Natural killer cell (primary cell): ENCODE measurements at regions of chr12 and their contacts with region 1.

Region 1: DNA sequence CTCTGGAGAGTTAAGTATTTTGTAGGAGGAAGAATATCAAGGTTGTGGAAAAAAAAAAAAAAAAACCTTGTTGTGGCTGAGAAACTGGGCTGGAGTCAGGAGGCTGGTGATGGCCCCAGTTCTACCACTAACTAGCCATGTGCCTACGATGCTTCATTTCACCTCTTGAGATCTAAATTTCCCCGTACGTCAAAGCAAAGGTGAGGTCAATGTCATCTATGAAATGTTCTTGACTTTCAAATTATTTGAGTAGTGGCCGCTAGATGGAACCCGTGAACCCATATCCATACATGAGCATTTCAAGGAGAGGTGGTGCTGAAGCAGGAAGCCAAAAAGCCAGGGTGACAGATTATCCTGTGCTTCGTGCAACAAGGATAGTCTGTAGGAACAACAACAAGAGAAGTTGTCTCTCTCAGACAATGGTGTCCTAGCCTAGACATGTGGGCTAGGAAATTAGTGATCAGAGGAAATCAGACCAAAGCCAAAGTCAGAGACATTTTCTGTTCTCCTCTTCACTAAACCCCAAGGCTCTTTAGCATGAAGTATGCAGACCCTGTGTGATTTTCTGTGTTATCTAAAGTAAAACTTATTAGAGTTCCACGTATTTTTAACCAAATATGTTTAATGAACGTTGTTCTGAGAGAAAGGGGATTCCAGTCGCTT is 95.5 kb upstream of the ETV6 start:
- DNase-seq: peak in 1 of 2 donors; percentile 81
- ATAC-seq: peak; percentile 69 to 89 (median 78)
- H3K4me3 ChIP-seq: no peak overlapping the region
- H3K4me3 Mint-ChIP-seq: no peak overlapping the region
- H3K27ac ChIP-seq: no peak overlapping the region
- H3K27ac Mint-ChIP-seq: no peak overlapping the region
- H3K4me1 ChIP-seq: peaks cover 2% of the 10 kb centered on the region
- H3K4me1 Mint-ChIP-seq: peaks cover 7% of the 10 kb centered on the region in 2 donors
- H3K27me3 ChIP-seq: no peaks in the 10 kb centered on the region
- H3K27me3 Mint-ChIP-seq: peaks cover 23 to 36% of the 10 kb centered on the region in 2 donors
- CTCF ChIP-seq: peak; percentile 61

Region 2: DNA sequence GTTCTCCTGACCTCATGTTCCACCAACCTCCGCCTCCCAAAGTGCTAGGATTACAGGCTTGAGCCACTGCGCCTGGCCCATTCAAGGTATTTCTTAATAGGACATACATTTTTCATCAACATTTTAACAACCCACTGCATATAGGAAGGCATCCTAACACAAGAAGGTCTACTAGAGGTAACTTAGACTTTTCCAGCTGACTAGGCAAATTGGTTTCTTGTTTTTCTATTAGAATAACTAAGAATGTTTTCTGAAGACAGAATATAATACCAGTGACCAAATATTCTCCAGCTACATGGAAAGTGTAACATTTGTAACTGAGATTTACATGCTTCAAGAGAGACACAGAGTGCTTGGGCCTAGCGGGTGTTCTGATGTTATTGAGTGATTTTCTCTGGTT is 229.6 kb before region 1 on chr12:
- intact Hi-C with region 1: no loop called
- DNase-seq: no peak
- ATAC-seq: no peak
- H3K4me3 ChIP-seq: no peak overlapping the region
- H3K4me3 Mint-ChIP-seq: no peak overlapping the region
- H3K27ac ChIP-seq: no peak overlapping the region
- H3K27ac Mint-ChIP-seq: no peak overlapping the region
- H3K4me1 ChIP-seq: no peaks in the 10 kb centered on the region
- H3K4me1 Mint-ChIP-seq: no peaks in the 10 kb centered on the region
- H3K27me3 ChIP-seq: no peaks in the 10 kb centered on the region
- H3K27me3 Mint-ChIP-seq: peaks cover 0 to 2% of the 10 kb centered on the region in 2 donors
- CTCF ChIP-seq: no peak

Region 3: GRCh38 chr12:11540615-11541310 is 13.2 kb before region 1 on chr12:
- intact Hi-C with region 1: no loop called
- DNase-seq: peak in 1 of 2 donors; percentile 21
- ATAC-seq: no peak
- H3K4me3 ChIP-seq: no peak overlapping the region
- H3K4me3 Mint-ChIP-seq: no peak overlapping the region
- H3K27ac ChIP-seq: no peak overlapping the region
- H3K27ac Mint-ChIP-seq: no peak overlapping the region
- H3K4me1 ChIP-seq: peaks cover 15% of the 10 kb centered on the region
- H3K4me1 Mint-ChIP-seq: peaks cover 10 to 17% of the 10 kb centered on the region in 2 donors
- H3K27me3 ChIP-seq: no peaks in the 10 kb centered on the region
- H3K27me3 Mint-ChIP-seq: peaks cover 0 to 6% of the 10 kb centered on the region in 2 donors
- CTCF ChIP-seq: no peak

Region 4: DNA sequence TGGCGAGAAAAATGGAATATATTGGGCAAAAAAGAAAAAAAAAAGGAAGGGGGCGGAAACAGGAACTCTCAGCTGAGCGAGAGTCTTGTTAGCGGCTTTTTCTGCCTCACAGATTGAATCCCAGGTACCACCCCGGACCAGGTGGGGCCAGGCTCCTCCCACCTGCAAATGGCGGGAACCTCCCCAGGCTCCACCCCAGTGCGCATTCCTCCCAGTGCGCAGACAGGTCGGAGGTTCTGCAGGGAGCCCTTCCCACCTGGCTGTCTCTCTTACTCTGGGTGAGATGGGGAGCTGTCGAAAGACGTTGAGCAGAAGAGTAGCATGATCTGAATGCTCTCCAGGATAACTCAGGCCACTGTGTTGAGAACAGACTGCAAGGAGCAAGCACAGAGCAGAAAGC is 38.5 kb after region 1 on chr12:
- intact Hi-C with region 1: no loop called
- DNase-seq: no peak
- ATAC-seq: no peak
- H3K4me3 ChIP-seq: no peak overlapping the region
- H3K4me3 Mint-ChIP-seq: no peak overlapping the region
- H3K27ac ChIP-seq: no peak overlapping the region
- H3K27ac Mint-ChIP-seq: no peak overlapping the region
- H3K4me1 ChIP-seq: no peaks in the 10 kb centered on the region
- H3K4me1 Mint-ChIP-seq: no peaks in the 10 kb centered on the region
- H3K27me3 ChIP-seq: no peaks in the 10 kb centered on the region
- H3K27me3 Mint-ChIP-seq: peaks cover 4 to 14% of the 10 kb centered on the region in 2 donors
- CTCF ChIP-seq: no peak

Region 5: DNA sequence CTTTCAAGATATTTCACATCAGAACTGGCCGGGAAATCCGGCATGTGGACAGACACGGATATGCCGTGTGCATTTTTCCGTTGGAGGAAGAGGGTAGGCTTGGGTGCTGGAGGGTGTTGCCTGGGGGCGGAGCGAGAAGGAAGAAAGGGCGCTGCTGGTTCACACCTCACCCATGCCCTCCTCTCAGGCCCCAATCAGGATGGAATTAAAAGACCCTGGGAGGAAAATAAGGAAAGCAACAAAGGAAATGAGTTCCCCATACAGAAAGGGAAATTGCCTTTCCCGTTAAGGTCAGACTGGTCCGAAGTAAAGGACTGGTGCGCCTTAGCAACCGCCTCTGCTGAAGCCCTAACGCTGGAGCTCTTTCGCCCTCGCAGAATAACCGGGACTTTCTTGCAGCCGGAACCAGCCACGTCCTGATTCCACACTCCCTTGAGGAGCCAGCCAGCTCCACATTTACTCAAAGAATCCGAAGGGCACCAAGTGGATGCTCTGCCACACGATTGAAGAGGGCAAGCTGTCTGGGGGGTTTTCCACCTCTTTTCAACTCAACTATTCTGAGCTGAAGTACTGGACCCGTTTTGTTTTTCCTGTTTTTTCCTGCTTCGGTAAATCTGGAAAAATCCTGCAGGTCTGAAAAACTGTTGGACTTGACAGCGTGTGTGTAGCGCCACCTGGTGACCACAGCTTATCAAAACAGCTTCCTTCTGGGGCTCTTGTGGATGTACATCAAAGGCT is 479.0 kb after region 1 on chr12:
- intact Hi-C with region 1: loop called (anchors 1 kb)
- DNase-seq: peak; percentile 39 to 86
- ATAC-seq: peak; percentile 71 to 83 (median 77)
- H3K4me3 ChIP-seq: peak overlapping the region; percentile 44
- H3K4me3 Mint-ChIP-seq: peak overlapping the region; percentile 74
- H3K27ac ChIP-seq: no peak overlapping the region
- H3K27ac Mint-ChIP-seq: peak overlapping the region in 1 of 2 donors; percentile 6
- H3K4me1 ChIP-seq: peaks cover 16% of the 10 kb centered on the region
- H3K4me1 Mint-ChIP-seq: peaks cover 12 to 19% of the 10 kb centered on the region in 2 donors
- H3K27me3 ChIP-seq: no peaks in the 10 kb centered on the region
- H3K27me3 Mint-ChIP-seq: peaks cover 9 to 42% of the 10 kb centered on the region in 2 donors
- CTCF ChIP-seq: peak; percentile 93